ENCODE measurements at regions of chr6 and their contacts with region 1.

Region 1: GRCh38 chr6:3549314-3549940 is 92.6 kb upstream of the SLC22A23 start:
- DNase-seq: no peak
- H3K4me3 ChIP-seq: no peak overlapping the region
- H3K27ac ChIP-seq: no peak overlapping the region
- H3K4me1 ChIP-seq: no peaks in the 10 kb centered on the region
- H3K27me3 ChIP-seq: no peaks in the 10 kb centered on the region
- CTCF ChIP-seq: no peak
- POLR2A ChIP-seq: no peak

Region 2: DNA sequence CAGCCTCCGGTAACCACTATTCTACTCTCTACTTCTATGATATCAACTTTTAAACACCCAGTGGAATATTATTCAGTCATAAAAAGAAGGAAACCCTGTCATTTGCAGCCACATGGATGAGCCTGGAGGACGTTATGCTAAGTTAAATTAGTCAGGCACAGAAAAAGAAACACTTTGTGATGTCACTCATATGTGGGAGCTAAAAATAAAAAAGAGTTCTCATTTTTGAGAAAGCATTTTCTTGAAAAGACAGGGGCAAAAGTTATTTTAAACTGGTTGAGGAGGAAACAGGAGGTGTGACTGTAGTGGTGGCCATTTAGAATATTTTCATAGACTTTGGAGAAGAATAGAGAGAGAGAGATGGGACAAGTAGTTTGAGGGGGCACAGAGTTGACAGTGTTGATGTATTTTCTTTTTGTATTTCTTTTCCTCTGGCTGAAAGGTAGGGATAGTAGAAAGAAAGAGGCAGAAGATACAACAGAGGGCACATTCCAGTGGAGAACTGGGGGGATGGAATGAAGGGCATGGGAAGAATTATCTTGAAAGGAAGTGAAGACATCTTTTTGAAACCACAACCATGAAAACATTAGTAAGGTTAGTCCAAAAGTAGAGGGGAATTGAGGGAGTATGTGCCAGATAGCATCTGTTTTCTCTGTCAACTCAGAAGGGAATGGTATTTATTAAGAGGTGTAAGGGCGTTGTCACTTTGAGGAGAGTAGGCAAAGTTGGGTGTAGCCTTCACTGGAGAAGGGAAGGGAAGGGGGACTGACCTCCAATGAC is 1122.7 kb before region 1 on chr6:
- intact Hi-C with region 1: loop called (anchors 10 kb)
- DNase-seq: no peak
- H3K4me3 ChIP-seq: no peak overlapping the region
- H3K27ac ChIP-seq: no peak overlapping the region
- H3K4me1 ChIP-seq: no peaks in the 10 kb centered on the region
- H3K27me3 ChIP-seq: no peaks in the 10 kb centered on the region
- CTCF ChIP-seq: no peak
- POLR2A ChIP-seq: no peak

Region 3: DNA sequence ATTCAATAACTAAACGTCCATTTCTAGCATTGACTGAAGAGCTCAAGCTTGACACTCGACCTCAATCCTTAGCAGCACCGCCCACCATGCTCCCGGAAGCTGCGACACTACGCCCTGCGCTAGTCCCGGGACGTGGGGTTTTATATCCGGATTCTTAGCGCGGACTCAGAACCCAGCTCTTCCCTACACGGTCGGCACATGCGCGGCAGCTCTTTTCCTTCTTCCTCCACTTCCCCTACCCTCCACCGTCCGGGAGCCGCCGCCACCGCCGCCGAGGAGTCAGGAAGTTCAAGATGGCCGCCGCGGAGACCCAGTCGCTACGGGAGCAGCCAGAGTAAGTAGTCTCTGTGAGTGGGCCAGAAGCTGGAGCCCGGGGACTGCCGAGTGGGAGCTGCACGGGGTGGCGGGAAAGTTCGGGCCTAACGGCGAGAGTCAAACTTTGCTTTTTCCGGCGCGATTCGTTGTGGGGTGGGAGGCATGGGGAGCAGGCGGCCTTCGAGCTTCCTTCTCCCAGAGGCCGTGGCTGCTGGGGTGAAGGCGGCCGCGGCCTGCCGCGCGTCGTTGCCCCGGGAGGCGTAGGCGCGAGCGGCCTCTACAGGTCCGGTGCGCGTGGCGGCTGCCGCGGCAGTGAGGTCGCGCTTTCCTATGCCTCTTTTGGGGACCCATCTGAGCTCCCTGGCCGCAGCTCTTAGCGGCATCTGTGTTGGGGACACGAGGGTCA is 471.9 kb after region 1 on chr6:
- intact Hi-C with region 1: no loop called
- DNase-seq: peak; percentile 93 to 94
- H3K4me3 ChIP-seq: peak overlapping the region; percentile 70 to 86 (median 84)
- H3K27ac ChIP-seq: peak overlapping the region; percentile 98 to 99
- H3K4me1 ChIP-seq: peaks cover 0 to 22% of the 10 kb centered on the region in 2 donors
- H3K27me3 ChIP-seq: no peaks in the 10 kb centered on the region
- CTCF ChIP-seq: peak in 2 of 3 donors; percentile 25 to 44
- POLR2A ChIP-seq: peak; percentile 63